GM10248 (cell line): ENCODE measurements at regions of chr10 and their contacts with region 1.

Region 1: DNA sequence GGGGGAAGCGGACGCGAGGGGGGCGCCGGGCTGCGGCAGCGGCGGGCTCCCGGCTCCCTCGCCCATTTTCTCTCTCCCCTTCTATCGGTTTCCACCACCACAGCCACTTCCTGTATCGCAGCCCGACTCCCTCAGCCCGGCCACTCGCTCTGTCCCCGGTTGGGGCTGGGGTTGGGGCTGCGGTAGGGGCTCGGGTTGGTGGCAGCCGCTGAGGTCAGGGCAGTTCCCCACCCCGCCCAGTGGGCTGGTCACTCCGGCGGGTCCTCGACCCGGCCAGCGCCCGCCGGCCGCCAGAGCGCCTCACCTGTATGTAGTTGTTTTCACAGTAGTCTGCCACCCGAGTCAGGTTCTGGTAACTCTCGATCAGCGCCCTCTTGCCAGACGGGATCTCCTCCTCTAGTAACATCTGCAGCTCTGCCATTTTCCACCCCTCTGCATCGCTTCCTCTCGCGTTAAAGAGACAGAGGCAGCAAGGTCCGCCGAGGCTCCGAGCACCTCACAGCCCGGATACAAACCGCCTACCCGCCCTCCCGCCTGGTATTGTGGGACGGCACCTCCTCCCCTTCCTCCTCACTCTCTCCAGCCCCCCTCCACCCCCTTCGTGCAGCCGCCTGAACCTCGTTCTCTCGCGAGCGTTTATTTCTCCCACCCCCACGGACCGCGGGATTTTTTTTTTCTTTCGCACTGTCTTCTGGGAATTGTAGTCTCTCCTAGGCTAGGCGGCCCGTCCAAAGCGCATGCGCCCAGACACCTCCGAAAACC is at the start of gene ABI1:
- DNase-seq: peak; percentile 96
- CTCF ChIP-seq: no peak

Region 2: GRCh38 chr10:26733750-26734568 is 126.7 kb before region 1 on chr10:
- CTCF ChIA-PET with region 1: interaction called, 15 read pairs
- POLR2A ChIA-PET with region 1: interaction called, 9 read pairs
- DNase-seq: no peak
- CTCF ChIP-seq: no peak

Region 3: DNA sequence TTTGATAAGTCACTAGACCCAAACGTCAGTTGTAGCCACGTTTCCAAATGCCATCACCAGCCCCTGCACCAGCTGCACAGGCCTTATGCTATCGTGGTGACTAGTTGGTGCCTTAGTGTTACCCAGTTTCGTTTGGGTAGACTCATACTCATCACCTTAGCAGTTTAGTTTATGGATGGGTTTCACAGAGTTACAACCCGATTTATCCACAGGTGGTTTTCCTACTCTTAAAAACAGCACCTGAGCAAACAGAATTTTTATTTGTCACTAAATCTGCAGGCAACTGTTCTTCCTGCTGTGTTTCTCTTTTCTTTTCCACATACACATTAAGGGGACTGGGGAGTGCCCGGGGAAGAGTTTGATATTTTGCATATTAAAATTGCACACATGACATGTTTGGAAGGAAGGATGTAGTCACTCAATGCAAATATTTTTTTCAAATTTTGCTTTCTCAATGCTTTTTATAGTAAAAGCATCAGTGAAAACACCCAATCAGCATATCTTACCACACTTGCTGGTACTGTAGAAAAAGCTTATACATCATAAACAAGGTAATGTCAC is 121.5 kb before region 1 on chr10:
- CTCF ChIA-PET with region 1: interaction called, 15 read pairs
- POLR2A ChIA-PET with region 1: interaction called, 4 read pairs
- DNase-seq: no peak
- CTCF ChIP-seq: no peak

Region 4: GRCh38 chr10:26805567-26806245 is 54.9 kb before region 1 on chr10:
- CTCF ChIA-PET with region 1: no interaction called
- POLR2A ChIA-PET with region 1: interaction called, 10 read pairs
- DNase-seq: no peak
- CTCF ChIP-seq: no peak